Heart right ventricle (tissue), 16 donors: ENCODE measurements at regions of chr5 and their contacts with region 1.

Region 1: GRCh38 chr5:139482050-139482889 is at the start of gene STING1:
- DNase-seq: peak; percentile 71 to 85
- ATAC-seq: peak; percentile 73 to 80 (median 76)
- H3K4me3 ChIP-seq: peak within 1 kb of the TSS; percentile 42 to 71 (median 60)
- H3K27ac ChIP-seq: peak within 1 kb of the TSS; percentile 89 to 97 (median 96)
- H3K4me1 ChIP-seq: peaks cover 16 to 77% (median 56%) of the 10 kb centered on the region in 9 donors
- H3K27me3 ChIP-seq: no peaks in the 10 kb centered on the region
- CTCF ChIP-seq: peak in 1 of 9 donors; percentile 7
- total RNA-seq, gene STING1: 27.2 to 116 (median 55.7) TPM

Region 2: DNA sequence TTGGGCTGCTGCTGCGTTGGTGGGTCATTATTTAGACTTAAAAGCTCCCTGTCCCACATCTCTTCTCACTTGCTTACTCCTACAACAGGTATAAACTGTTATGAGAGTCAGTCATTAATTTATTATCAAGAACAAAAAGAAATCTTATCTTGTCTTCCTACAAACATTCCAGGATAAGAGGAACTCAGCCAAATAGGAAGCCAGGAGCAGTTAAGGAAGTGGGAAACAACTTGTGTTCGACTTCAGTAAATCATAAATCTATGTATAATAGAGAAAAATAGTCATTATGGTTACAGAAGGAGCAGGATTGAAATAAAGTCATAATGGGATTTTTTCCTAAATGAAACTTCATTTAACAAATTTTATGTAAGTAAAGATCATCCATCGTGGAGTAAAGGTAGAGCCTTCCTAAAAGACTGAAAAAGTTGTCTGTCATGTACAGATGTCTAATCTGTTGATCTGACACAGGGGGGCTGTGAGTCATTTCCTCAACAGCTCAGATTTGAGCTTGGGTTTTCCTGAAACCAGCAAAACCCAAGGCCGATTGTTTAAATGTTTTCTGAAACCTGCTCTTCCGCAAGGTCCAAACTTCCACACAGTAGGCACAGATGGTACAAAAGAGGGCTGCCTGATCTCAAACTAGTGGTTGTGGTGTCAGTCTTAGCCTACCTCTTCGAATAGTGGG is 581.8 kb before region 1 on chr5:
- intact Hi-C with region 1: no loop called
- DNase-seq: peak in 1 of 2 donors; percentile 19
- ATAC-seq: peak in 5 of 8 donors; percentile 27 to 74 (median 40)
- H3K4me3 ChIP-seq: no peak overlapping the region
- H3K27ac ChIP-seq: peak overlapping the region in 6 of 10 donors; percentile 12 to 68 (median 31)
- H3K4me1 ChIP-seq: peaks cover 0 to 63% (median 38%) of the 10 kb centered on the region in 9 donors
- H3K27me3 ChIP-seq: no peaks in the 10 kb centered on the region
- CTCF ChIP-seq: no peak

Region 3: GRCh38 chr5:139439013-139439903 is 43.0 kb before region 1 on chr5 and contains the start of gene DNAJC18:
- intact Hi-C with region 1: loop called in 1 of 10 experiments (anchors 5 kb)
- DNase-seq: peak; percentile 94 to 95
- ATAC-seq: peak; percentile 98 to 99 (median 99)
- H3K4me3 ChIP-seq: peak within 1 kb of the TSS; percentile 47 to 95 (median 78)
- H3K27ac ChIP-seq: peak within 1 kb of the TSS; percentile 85 to 98 (median 92)
- H3K4me1 ChIP-seq: peaks cover 0 to 22% (median 12%) of the 10 kb centered on the region in 9 donors
- H3K27me3 ChIP-seq: no peaks in the 10 kb centered on the region
- CTCF ChIP-seq: no peak
- total RNA-seq, gene DNAJC18: 9.5 to 21.1 (median 14.1) TPM